Dendritic cell treated with granulocyte-macrophage colony-stimulating factor and Interleukin-4, amounts not matched to agents 40 ng/mL and 50 ng/mL, for 4 days (primary cell): ENCODE measurements at regions of chr6 and their contacts with region 1.

Region 1: GRCh38 chr6:153032255-153032882 is 29.9 kb upstream of the MTRF1L start:
- H3K4me3 Mint-ChIP-seq: no peak overlapping the region
- H3K27ac Mint-ChIP-seq: no peak overlapping the region
- H3K4me1 Mint-ChIP-seq: peaks cover 9% of the 10 kb centered on the region
- H3K27me3 Mint-ChIP-seq: no peaks in the 10 kb centered on the region

Region 2: DNA sequence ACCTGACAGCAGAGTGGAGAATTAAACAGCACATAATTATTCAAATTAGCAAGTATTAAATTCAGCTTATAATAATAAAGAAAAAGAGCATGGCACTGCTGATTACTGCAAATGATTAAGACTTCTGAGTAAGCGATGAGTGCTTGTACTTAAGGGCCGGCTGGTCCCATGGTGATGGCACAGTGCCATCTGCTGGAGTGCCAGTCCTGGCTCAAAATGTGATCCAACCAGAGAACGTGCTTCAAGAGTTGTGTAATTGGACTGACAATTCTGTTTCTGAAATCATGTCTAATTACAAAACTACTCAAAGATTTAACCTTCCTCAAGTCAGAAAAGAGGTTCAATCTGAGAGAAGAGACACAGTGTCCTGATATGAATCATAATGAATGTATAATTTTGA is 280.3 kb after region 1 on chr6:
- intact Hi-C with region 1: loop called (anchors 2 kb)
- H3K4me3 Mint-ChIP-seq: no peak overlapping the region
- H3K27ac Mint-ChIP-seq: no peak overlapping the region
- H3K4me1 Mint-ChIP-seq: no peaks in the 10 kb centered on the region
- H3K27me3 Mint-ChIP-seq: peaks cover 2% of the 10 kb centered on the region

Region 3: DNA sequence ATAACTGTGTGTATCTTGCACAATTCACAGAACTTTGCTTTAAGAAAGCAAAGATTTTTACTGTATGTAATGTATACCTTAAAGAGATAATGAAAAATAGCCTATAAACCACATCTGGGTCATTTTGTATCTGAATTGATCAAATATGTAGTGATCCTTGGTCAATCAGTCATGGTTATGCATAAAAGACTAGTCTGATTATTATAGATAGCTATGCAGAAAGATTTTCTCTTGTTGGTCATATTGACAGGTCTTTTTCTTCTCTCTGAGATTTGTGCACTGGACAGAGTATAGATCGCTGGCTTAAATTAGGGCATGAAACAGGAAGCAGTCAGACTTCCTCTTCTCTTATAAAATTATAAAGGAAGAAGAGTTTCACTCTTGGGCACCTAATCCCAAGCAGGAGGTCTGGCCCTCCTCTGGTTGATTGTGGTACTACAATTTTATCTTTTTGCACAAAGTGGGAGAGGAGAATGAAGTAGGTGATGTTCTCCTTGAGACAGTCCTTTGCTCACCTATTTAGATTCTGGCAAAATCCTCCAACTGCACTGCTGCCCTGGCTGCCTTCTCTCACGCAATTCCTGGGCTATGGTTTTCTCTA is 479.6 kb after region 1 on chr6:
- intact Hi-C with region 1: loop called (anchors 5 kb)
- H3K4me3 Mint-ChIP-seq: no peak overlapping the region
- H3K27ac Mint-ChIP-seq: no peak overlapping the region
- H3K4me1 Mint-ChIP-seq: no peaks in the 10 kb centered on the region
- H3K27me3 Mint-ChIP-seq: no peaks in the 10 kb centered on the region